ENCODE measurements at regions of chr4 and their contacts with region 1.

Region 1: DNA sequence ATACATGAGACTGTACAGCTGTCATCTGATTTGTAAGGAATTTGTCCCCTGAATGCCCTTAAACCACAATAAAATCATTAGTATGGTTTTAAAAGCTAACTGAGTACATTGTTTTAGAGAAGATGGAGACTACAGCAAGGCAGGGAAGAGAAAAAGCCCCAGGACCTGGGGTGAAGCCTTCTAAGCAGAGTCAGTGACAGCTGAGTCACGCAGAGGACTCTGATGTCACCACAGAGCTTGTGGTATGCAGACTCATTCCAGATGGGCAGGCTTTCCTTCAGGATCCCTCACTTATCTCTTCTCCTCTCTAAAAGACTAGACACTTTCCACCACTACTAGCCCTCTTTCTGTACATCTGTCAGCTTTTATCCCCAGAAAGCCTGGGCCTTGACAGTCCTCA is 97.1 kb upstream of the ATOH1 start:
- DNase-seq: no peak
- H3K4me3 ChIP-seq: no peak overlapping the region
- H3K27ac ChIP-seq: no peak overlapping the region
- H3K4me1 ChIP-seq: no peaks in the 10 kb centered on the region
- H3K27me3 ChIP-seq: no peaks in the 10 kb centered on the region
- CTCF ChIP-seq: no peak
- EP300 ChIP-seq: no peak
- POLR2A ChIP-seq: no peak

Region 2: DNA sequence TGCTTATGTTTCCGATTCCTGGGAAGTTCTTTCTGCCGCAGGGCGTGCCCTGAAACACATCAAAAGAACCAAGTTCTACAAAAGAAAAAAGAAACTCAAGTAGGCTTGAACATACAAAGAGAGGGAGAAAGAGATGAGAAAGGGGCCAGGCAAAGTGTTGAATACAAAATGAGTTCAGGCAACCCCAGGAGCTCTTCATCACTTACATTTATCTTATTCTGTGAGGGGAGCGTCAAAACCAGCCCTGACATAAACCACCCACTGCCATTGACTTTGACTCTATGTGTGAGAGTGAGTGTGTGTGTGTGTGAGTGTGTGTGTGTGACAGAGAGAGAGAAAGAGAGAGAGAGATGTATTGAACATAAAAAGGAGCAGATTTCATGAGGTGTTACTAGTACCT is 70.6 kb after region 1 on chr4:
- in situ Hi-C with region 1: no loop called
- intact Hi-C with region 1: no loop called
- DNase-seq: no peak
- H3K4me3 ChIP-seq: no peak overlapping the region
- H3K27ac ChIP-seq: no peak overlapping the region
- H3K4me1 ChIP-seq: no peaks in the 10 kb centered on the region
- H3K27me3 ChIP-seq: no peaks in the 10 kb centered on the region
- CTCF ChIP-seq: no peak
- EP300 ChIP-seq: no peak
- POLR2A ChIP-seq: no peak

Region 3: DNA sequence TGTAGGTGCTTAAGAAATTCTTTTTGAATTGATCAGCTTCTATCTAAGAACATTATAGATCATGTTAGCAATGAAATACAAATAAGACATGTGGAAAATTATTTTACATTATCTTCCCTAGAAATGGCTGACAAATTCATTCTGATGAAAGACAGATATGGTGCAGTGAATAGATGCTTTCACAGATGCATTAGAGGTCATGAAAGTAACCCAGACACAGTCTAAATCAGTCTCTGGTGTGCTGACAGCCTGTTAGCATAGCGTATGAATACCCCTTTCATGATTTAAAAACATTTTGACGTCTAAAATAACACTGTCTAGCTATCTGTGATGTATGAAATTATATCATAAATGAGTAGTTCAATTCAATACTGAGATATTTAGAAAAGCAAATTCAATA is 1636.4 kb after region 1 on chr4:
- in situ Hi-C with region 1: no loop called
- intact Hi-C with region 1: loop called (anchors 5 kb)
- DNase-seq: no peak
- H3K4me3 ChIP-seq: no peak overlapping the region
- H3K27ac ChIP-seq: no peak overlapping the region
- H3K4me1 ChIP-seq: no peaks in the 10 kb centered on the region
- H3K27me3 ChIP-seq: no peaks in the 10 kb centered on the region
- CTCF ChIP-seq: no peak
- EP300 ChIP-seq: no peak
- POLR2A ChIP-seq: no peak